B cell (primary cell): ENCODE measurements at regions of chr2 and their contacts with region 1.

Region 1: GRCh38 chr2:201860636-201861066 is 54.3 kb downstream of the CDK15 start:
- DNase-seq: peak; percentile 72
- ATAC-seq: peak; percentile 74
- H3K4me3 ChIP-seq: no peak overlapping the region
- H3K4me3 Mint-ChIP-seq: no peak overlapping the region
- H3K27ac ChIP-seq: no peak overlapping the region
- H3K27ac Mint-ChIP-seq: no peak overlapping the region
- H3K4me1 ChIP-seq: peaks cover 3 to 6% of the 10 kb centered on the region in 2 donors
- H3K4me1 Mint-ChIP-seq: peaks cover 8% of the 10 kb centered on the region
- H3K27me3 ChIP-seq: peaks cover 0 to 44% (median 32%) of the 10 kb centered on the region in 4 experiments
- H3K27me3 Mint-ChIP-seq: peaks cover 62% of the 10 kb centered on the region
- CTCF ChIP-seq: peak; percentile 88

Region 2: GRCh38 chr2:201847481-201847880 is 13.2 kb before region 1 on chr2:
- CTCF ChIA-PET with region 1: interaction called, 15 read pairs
- POLR2A ChIA-PET with region 1: no interaction called
- intact Hi-C with region 1: no loop called
- DNase-seq: no peak
- ATAC-seq: no peak
- H3K4me3 ChIP-seq: no peak overlapping the region
- H3K4me3 Mint-ChIP-seq: no peak overlapping the region
- H3K27ac ChIP-seq: no peak overlapping the region
- H3K27ac Mint-ChIP-seq: no peak overlapping the region
- H3K4me1 ChIP-seq: no peaks in the 10 kb centered on the region
- H3K4me1 Mint-ChIP-seq: no peaks in the 10 kb centered on the region
- H3K27me3 ChIP-seq: peaks cover 0 to 4% (median 0%) of the 10 kb centered on the region in 4 experiments
- H3K27me3 Mint-ChIP-seq: peaks cover 16% of the 10 kb centered on the region
- CTCF ChIP-seq: no peak

Region 3: DNA sequence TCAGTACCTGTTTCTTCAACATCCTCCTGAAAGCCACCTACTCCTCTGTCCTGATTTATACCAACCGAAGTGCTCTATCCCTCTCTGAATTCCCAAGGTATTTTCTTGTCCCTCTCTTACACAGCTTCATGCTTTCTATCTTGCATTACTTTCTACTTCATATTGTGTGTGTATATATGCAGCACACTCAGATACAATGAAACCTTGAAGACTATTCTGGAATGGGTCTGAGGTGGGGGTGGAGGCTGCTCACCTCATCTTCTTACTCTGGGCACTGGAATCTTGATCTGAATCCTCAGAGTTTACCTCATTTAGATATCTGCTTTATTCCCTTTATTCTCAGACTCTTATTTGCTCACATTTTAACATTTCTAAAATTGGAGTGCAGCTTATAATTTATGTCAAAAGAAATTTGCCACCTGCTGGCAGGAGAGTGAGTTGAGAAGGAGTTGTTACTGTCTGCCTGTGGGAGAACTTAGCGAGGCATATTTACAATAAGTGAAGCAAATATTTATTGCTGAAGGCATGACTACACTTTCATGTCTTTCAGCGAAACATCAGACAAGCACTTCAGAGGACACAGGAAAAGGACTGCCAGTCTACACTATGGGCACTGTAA is 195.8 kb after region 1 on chr2:
- CTCF ChIA-PET with region 1: interaction called, 7 read pairs
- POLR2A ChIA-PET with region 1: no interaction called
- intact Hi-C with region 1: loop called (anchors 1 kb)
- DNase-seq: no peak
- ATAC-seq: no peak
- H3K4me3 ChIP-seq: no peak overlapping the region
- H3K4me3 Mint-ChIP-seq: no peak overlapping the region
- H3K27ac ChIP-seq: no peak overlapping the region
- H3K27ac Mint-ChIP-seq: no peak overlapping the region
- H3K4me1 ChIP-seq: no peaks in the 10 kb centered on the region
- H3K4me1 Mint-ChIP-seq: no peaks in the 10 kb centered on the region
- H3K27me3 ChIP-seq: peaks cover 0 to 17% (median 4%) of the 10 kb centered on the region in 4 experiments
- H3K27me3 Mint-ChIP-seq: peaks cover 56% of the 10 kb centered on the region
- CTCF ChIP-seq: no peak

Region 4: DNA sequence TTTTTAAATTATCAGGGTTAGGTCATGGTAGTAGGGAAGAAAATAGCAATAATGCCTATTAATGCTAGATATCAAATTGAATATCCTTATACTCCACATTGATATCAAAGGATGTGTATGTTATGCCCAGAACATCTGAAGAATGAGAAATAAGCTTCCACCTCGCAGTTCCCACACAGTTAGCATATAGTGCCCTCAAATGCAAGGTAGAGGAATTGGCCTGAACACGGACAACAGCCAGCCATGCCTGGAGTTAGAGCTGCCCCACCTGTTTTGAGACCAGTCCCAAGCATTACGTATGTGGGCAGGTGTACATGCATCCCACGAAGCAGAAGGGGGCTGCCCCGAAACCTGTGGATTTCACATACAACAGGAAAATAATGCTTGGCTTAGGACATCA is 298.1 kb after region 1 on chr2:
- CTCF ChIA-PET with region 1: interaction called, 10 read pairs
- POLR2A ChIA-PET with region 1: no interaction called
- intact Hi-C with region 1: no loop called
- DNase-seq: no peak
- ATAC-seq: no peak
- H3K4me3 ChIP-seq: no peak overlapping the region
- H3K4me3 Mint-ChIP-seq: no peak overlapping the region
- H3K27ac ChIP-seq: no peak overlapping the region
- H3K27ac Mint-ChIP-seq: no peak overlapping the region
- H3K4me1 ChIP-seq: no peaks in the 10 kb centered on the region
- H3K4me1 Mint-ChIP-seq: peaks cover 3% of the 10 kb centered on the region
- H3K27me3 ChIP-seq: no peaks in the 10 kb centered on the region
- H3K27me3 Mint-ChIP-seq: peaks cover 21% of the 10 kb centered on the region
- CTCF ChIP-seq: no peak

Region 5: DNA sequence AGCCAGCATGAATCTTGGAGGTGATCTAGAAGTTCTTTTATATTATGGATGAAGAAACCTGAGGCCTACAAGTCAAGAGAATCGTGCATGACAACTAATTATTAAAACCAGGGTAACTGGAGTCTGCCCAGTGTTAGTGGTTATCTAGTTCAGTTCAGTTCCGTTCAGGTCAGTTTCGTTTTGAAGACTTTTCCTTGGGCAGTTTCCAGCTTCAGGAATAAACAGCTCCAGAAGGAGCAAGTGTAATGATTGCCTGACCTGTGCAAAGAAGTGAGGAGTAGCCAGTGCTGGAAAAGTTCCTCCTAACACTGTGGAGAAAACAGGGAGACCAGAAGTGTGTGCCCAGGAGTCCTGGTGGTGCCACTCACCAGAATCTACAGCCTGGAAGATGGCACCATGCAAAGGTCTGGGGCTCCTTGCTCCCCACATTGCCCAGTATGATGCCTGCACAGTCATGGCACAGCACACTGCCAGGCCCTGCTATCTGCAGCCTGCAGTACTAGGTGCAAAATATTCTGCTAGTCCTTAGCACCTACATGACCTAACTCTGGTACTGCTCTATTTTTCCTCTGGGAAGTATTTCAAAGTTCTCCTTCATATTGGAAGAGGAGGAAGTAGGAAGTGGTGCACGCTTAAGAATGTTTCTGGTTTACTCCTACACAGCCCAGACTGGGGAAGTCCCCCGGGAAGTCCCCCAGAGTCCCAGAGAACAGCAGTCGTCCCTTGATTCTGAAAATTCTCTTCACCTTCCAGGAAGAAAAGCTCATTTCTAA is 312.0 kb after region 1 on chr2:
- CTCF ChIA-PET with region 1: interaction called, 198 read pairs
- POLR2A ChIA-PET with region 1: no interaction called
- intact Hi-C with region 1: no loop called
- DNase-seq: peak; percentile 33
- ATAC-seq: peak; percentile 41
- H3K4me3 ChIP-seq: no peak overlapping the region
- H3K4me3 Mint-ChIP-seq: peak overlapping the region; percentile 19
- H3K27ac ChIP-seq: no peak overlapping the region
- H3K27ac Mint-ChIP-seq: no peak overlapping the region
- H3K4me1 ChIP-seq: peaks cover 15 to 16% of the 10 kb centered on the region in 2 donors
- H3K4me1 Mint-ChIP-seq: peaks cover 15% of the 10 kb centered on the region
- H3K27me3 ChIP-seq: peaks cover 0 to 3% (median 0%) of the 10 kb centered on the region in 4 experiments
- H3K27me3 Mint-ChIP-seq: peaks cover 4% of the 10 kb centered on the region
- CTCF ChIP-seq: no peak

Region 6: GRCh38 chr2:202178342-202178958 is 317.8 kb after region 1 on chr2:
- CTCF ChIA-PET with region 1: interaction called, 198 read pairs
- POLR2A ChIA-PET with region 1: no interaction called
- intact Hi-C with region 1: no loop called
- DNase-seq: peak; percentile 69
- ATAC-seq: peak; percentile 47
- H3K4me3 ChIP-seq: no peak overlapping the region
- H3K4me3 Mint-ChIP-seq: no peak overlapping the region
- H3K27ac ChIP-seq: no peak overlapping the region
- H3K27ac Mint-ChIP-seq: no peak overlapping the region
- H3K4me1 ChIP-seq: no peaks in the 10 kb centered on the region
- H3K4me1 Mint-ChIP-seq: no peaks in the 10 kb centered on the region
- H3K27me3 ChIP-seq: no peaks in the 10 kb centered on the region
- H3K27me3 Mint-ChIP-seq: peaks cover 14% of the 10 kb centered on the region
- CTCF ChIP-seq: peak; percentile 93

Region 7: DNA sequence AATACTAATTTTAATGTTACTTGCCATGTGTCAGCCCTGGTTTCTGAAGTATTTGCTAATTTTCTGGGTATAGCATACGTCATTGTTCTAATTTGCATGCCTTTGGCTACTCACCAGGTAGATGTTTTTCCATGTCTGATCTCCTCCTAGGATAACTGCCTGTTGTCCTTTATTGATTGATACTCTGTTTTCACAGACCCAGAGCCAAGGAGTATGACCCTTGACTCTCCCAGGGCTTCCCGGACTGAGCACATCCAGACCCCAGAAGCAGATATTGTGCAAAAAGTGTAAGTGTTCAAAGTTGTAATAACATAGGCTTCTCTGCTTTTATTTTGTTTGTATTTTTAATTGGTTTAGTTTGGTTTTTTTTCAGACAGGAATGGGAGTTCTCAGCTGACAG is 323.9 kb after region 1 on chr2:
- CTCF ChIA-PET with region 1: interaction called, 198 read pairs
- POLR2A ChIA-PET with region 1: no interaction called
- intact Hi-C with region 1: no loop called
- DNase-seq: no peak
- ATAC-seq: no peak
- H3K4me3 ChIP-seq: no peak overlapping the region
- H3K4me3 Mint-ChIP-seq: no peak overlapping the region
- H3K27ac ChIP-seq: no peak overlapping the region
- H3K27ac Mint-ChIP-seq: no peak overlapping the region
- H3K4me1 ChIP-seq: no peaks in the 10 kb centered on the region
- H3K4me1 Mint-ChIP-seq: no peaks in the 10 kb centered on the region
- H3K27me3 ChIP-seq: no peaks in the 10 kb centered on the region
- H3K27me3 Mint-ChIP-seq: peaks cover 36% of the 10 kb centered on the region
- CTCF ChIP-seq: no peak